Caco-2 (cell line): ENCODE measurements at regions of chr12 and their contacts with region 1.

Region 1: DNA sequence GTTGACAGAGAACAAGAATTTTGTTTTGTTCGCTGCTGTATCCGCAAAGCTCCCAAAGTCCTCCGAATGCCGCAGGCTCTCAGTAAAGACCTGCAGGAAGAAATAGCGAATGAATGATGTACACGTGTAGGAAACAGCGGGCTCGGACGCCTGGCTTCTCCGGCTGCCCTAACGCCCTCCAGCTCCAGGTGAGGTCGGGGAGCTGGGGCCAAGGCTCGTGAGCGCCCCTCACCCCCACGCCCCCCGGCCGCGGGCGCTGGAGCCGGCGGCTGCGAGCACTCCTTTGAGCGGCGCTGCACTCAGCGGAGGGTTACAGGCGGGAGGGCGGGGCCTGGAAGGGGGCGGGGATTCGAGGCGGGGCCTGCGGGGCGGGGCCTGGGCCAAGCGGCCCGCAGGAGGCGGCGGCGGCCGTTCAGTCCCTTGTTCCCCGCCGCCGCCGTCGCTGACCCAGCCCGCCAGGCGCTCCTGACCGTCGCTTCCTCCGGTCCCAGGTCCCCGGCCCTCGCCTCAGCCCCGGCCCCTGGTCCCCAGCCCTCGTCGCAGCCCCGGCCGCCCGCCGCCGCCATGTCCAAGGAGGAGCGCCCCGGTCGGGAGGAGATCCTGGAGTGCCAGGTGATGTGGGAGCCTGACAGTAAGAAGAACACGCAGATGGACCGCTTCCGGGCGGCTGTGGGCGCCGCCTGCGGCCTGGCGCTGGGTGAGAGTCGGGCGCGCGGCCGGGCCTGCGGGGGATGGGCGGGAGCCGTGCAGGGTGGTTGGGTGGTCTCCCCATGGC is at the start of gene AACS:
- DNase-seq: peak; percentile 79 to 80
- H3K4me3 ChIP-seq: peak within 1 kb of the TSS; percentile 86
- H3K4me3 Mint-ChIP-seq: peak within 1 kb of the TSS; percentile 65
- H3K27ac Mint-ChIP-seq: no peak within 1 kb of the TSS
- H3K4me1 ChIP-seq: peaks cover 13% of the 10 kb centered on the region; the same call in 1 of the 2 replicates
- H3K4me1 Mint-ChIP-seq: peaks cover 7% of the 10 kb centered on the region
- H3K27me3 ChIP-seq: no peaks in the 10 kb centered on the region
- H3K27me3 Mint-ChIP-seq: no peaks in the 10 kb centered on the region
- CTCF ChIP-seq: peak in 1 of 2 experiments; percentile 6
- total RNA-seq, gene AACS: 31.3 and 31.8 TPM in 2 replicates

Region 2: GRCh38 chr12:124992874-124993625 is 72.2 kb before region 1 on chr12:
- CTCF ChIA-PET with region 1: interaction called, 3 read pairs
- POLR2A ChIA-PET with region 1: no interaction called
- intact Hi-C with region 1: loop called (anchors 1 kb)
- DNase-seq: peak; percentile 89 to 92
- H3K4me3 ChIP-seq: peak overlapping the region; percentile 60
- H3K4me3 Mint-ChIP-seq: peak overlapping the region; percentile 84
- H3K27ac Mint-ChIP-seq: peak overlapping the region; percentile 46
- H3K4me1 ChIP-seq: no peaks in the 10 kb centered on the region
- H3K4me1 Mint-ChIP-seq: peaks cover 18% of the 10 kb centered on the region
- H3K27me3 ChIP-seq: no peaks in the 10 kb centered on the region
- H3K27me3 Mint-ChIP-seq: no peaks in the 10 kb centered on the region
- CTCF ChIP-seq: peak; percentile 55 to 83

Region 3: DNA sequence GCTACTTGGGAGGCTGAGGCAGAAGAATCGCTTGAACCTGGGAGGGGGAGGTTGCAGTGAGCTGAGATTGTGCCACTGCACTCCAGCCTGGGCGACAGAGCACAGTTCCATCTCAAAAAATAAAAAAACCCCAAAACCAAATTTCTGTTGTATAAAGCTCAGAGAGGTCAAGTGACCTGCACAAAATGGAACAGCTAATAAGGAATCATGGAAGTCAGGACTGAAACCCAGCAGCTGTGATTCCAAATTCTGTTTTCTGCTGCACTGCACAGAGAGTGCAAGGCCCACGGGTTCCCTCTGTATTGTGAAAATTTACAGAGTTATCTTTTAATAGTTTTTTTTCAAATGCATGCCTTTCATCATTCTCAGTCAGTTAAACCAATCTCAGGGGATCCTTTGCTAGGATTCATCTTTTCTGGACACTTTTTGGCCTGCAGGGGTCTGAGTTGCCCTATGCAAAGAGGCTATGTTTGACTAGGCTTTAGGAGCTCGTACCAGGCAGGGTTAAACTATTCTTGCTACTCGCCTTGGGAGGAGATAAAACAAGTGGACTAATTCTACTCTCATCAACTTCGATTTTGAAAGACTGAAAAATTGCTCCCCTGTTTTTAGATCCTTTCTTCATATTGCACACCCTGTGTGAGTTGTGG is 26.1 kb before region 1 on chr12:
- CTCF ChIA-PET with region 1: interaction called, 6 read pairs
- POLR2A ChIA-PET with region 1: no interaction called
- intact Hi-C with region 1: loop called (anchors 2 kb)
- DNase-seq: peak in 1 of 2 experiments; percentile 19
- H3K4me3 ChIP-seq: no peak overlapping the region
- H3K4me3 Mint-ChIP-seq: no peak overlapping the region
- H3K27ac Mint-ChIP-seq: no peak overlapping the region
- H3K4me1 ChIP-seq: no peaks in the 10 kb centered on the region
- H3K4me1 Mint-ChIP-seq: no peaks in the 10 kb centered on the region
- H3K27me3 ChIP-seq: no peaks in the 10 kb centered on the region
- H3K27me3 Mint-ChIP-seq: no peaks in the 10 kb centered on the region
- CTCF ChIP-seq: peak in 1 of 2 experiments; percentile 46

Region 4: GRCh38 chr12:125049093-125049458 is 16.1 kb before region 1 on chr12:
- CTCF ChIA-PET with region 1: interaction called, 6 read pairs
- POLR2A ChIA-PET with region 1: interaction called, 9 read pairs
- intact Hi-C with region 1: loop called (anchors 1 kb)
- DNase-seq: no peak
- H3K4me3 ChIP-seq: peak overlapping the region; percentile 34
- H3K4me3 Mint-ChIP-seq: peak overlapping the region; percentile 75
- H3K27ac Mint-ChIP-seq: no peak overlapping the region
- H3K4me1 ChIP-seq: no peaks in the 10 kb centered on the region; the same call in 1 of the 2 replicates
- H3K4me1 Mint-ChIP-seq: no peaks in the 10 kb centered on the region
- H3K27me3 ChIP-seq: no peaks in the 10 kb centered on the region
- H3K27me3 Mint-ChIP-seq: no peaks in the 10 kb centered on the region
- CTCF ChIP-seq: no peak

Region 5: GRCh38 chr12:125092872-125093680 is 27.9 kb after region 1 on chr12:
- CTCF ChIA-PET with region 1: no interaction called
- POLR2A ChIA-PET with region 1: no interaction called
- intact Hi-C with region 1: loop called (anchors 1 kb)
- DNase-seq: peak; percentile 69 to 78
- H3K4me3 ChIP-seq: no peak overlapping the region
- H3K4me3 Mint-ChIP-seq: no peak overlapping the region
- H3K27ac Mint-ChIP-seq: peak overlapping the region; percentile 11
- H3K4me1 ChIP-seq: peaks cover 22% of the 10 kb centered on the region
- H3K4me1 Mint-ChIP-seq: peaks cover 14% of the 10 kb centered on the region
- H3K27me3 ChIP-seq: no peaks in the 10 kb centered on the region
- H3K27me3 Mint-ChIP-seq: no peaks in the 10 kb centered on the region
- CTCF ChIP-seq: peak in 1 of 2 experiments; percentile 36